Heart right ventricle (tissue), 16 donors: ENCODE measurements at regions of chr17 and their contacts with region 1.

Region 1: GRCh38 chr17:73516431-73516830 is 127.8 kb downstream of the SDK2 start:
- DNase-seq: no peak
- ATAC-seq: no peak
- H3K4me3 ChIP-seq: no peak overlapping the region
- H3K27ac ChIP-seq: no peak overlapping the region
- H3K4me1 ChIP-seq: no peaks in the 10 kb centered on the region
- H3K27me3 ChIP-seq: no peaks in the 10 kb centered on the region
- CTCF ChIP-seq: no peak

Region 2: GRCh38 chr17:73465675-73466230 is 50.7 kb before region 1 on chr17:
- intact Hi-C with region 1: loop called in 1 of 10 experiments (anchors 5 kb)
- DNase-seq: no peak
- ATAC-seq: no peak
- H3K4me3 ChIP-seq: no peak overlapping the region
- H3K27ac ChIP-seq: no peak overlapping the region
- H3K4me1 ChIP-seq: no peaks in the 10 kb centered on the region
- H3K27me3 ChIP-seq: no peaks in the 10 kb centered on the region
- CTCF ChIP-seq: no peak

Region 3: DNA sequence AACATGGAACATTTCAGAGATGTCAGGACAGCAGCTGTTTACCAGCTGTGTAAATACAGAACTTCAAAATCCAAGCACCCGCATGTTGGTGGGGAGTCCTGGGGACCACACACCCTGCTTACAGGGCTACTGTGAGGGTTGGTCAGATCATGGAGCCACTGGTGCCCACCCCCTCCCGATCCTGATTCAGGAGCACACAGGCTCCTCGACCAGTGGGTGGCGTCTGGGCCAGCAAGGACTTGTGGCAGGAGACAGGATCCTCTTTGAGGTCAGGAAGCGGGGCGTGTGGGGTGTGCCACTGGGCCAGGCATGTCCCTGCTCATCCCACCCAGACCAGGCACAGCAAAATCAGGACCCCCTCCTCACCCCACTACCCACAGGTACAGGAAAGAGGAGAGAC is 44.2 kb after region 1 on chr17:
- intact Hi-C with region 1: no loop called
- DNase-seq: no peak
- ATAC-seq: peak in 1 of 8 donors; percentile 12
- H3K4me3 ChIP-seq: no peak overlapping the region
- H3K27ac ChIP-seq: no peak overlapping the region
- H3K4me1 ChIP-seq: no peaks in the 10 kb centered on the region
- H3K27me3 ChIP-seq: peaks cover 0 to 5% (median 0%) of the 10 kb centered on the region in 7 donors
- CTCF ChIP-seq: no peak

Region 4: DNA sequence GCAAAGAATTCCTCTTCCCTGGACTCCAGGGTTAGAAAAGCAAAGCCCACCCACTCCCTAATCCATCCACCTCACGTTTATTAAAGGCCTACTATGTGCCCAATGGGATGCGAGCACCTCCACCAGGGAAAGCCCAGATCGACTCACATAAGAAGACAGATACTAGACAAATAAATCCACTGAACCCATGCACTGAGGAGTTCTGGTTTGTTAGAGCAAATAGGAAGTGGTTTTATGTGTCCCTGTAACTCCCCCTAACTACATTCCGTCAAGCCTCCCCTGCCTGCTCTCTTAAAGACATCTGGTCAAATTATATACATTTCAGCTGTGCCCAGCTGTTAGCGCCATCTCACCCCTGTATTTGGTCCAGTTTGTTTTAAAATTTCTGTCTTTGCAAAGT is 468.5 kb after region 1 on chr17:
- intact Hi-C with region 1: no loop called
- DNase-seq: no peak
- ATAC-seq: no peak
- H3K4me3 ChIP-seq: no peak overlapping the region
- H3K27ac ChIP-seq: no peak overlapping the region
- H3K4me1 ChIP-seq: peaks cover 0 to 4% (median 0%) of the 10 kb centered on the region in 9 donors
- H3K27me3 ChIP-seq: peaks cover 0 to 67% (median 23%) of the 10 kb centered on the region in 7 donors
- CTCF ChIP-seq: no peak